ENCODE measurements at regions of chr3 and their contacts with region 1.

Region 1: GRCh38 chr3:156151824-156152428 is 31.5 kb downstream of the KCNAB1 start:
- DNase-seq: peak; percentile 11
- H3K4me3 Mint-ChIP-seq: no peak overlapping the region
- H3K27ac Mint-ChIP-seq: no peak overlapping the region
- H3K4me1 Mint-ChIP-seq: peaks cover 7% of the 10 kb centered on the region
- H3K27me3 Mint-ChIP-seq: peaks cover 7% of the 10 kb centered on the region

Region 2: GRCh38 chr3:156382458-156383346 is 230.8 kb after region 1 on chr3:
- intact Hi-C with region 1: loop called (anchors 2 kb)
- DNase-seq: no peak
- H3K4me3 Mint-ChIP-seq: no peak overlapping the region
- H3K27ac Mint-ChIP-seq: no peak overlapping the region
- H3K4me1 Mint-ChIP-seq: no peaks in the 10 kb centered on the region
- H3K27me3 Mint-ChIP-seq: peaks cover 19% of the 10 kb centered on the region

Region 3: DNA sequence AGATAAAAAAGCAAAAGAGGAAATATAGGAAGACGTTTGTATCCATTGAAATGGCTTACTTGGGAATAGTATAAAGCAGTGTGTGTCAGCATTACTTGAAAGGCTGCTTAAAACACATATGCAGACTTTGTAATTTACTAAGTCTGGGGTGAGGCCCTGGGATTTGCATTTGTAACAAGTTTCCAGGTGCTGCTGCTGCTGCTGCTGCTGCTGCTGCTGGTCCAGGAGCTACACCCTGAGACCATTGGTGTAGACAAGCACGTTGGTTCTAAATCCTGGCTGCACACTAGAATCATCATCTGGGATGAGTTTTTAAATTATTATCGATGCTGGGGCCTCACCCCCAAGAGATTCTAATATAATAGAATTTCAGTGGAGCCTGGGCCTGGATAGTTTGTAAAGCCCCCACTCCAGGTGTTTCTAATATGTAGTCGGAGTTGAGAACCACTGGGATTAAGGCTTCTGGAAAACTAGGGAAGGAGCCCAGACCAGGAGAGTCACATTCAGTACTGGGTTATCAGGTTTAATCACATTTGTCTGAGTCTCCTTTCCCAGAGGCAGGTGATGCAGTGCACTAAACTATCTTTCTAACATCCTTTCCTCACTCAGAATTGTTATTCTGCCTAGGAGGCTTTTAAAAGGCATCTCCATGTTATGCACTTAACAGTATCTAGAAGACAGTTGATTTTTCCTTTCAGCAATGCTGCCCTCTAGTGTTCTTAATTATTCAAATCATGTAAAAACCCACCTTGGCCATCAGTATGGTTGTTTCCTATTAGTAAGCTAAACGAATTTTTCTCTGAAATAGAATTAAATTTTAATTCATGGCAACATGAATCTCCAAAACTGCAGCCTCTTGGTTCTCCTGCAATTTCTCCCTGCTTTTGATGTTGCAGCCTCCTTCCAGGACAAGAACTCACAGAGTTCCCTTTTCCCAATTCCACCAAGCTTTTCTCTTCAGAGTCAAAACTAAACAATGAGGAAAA is 357.6 kb after region 1 on chr3:
- intact Hi-C with region 1: loop called (anchors 1 kb)
- DNase-seq: no peak
- H3K4me3 Mint-ChIP-seq: no peak overlapping the region
- H3K27ac Mint-ChIP-seq: no peak overlapping the region
- H3K4me1 Mint-ChIP-seq: peaks cover 14% of the 10 kb centered on the region
- H3K27me3 Mint-ChIP-seq: peaks cover 20% of the 10 kb centered on the region

Region 4: GRCh38 chr3:156816800-156817645 is 665.1 kb after region 1 on chr3:
- intact Hi-C with region 1: loop called (anchors 10 kb)
- DNase-seq: peak; percentile 90
- H3K4me3 Mint-ChIP-seq: peak overlapping the region; percentile 92
- H3K27ac Mint-ChIP-seq: peak overlapping the region; percentile 98
- H3K4me1 Mint-ChIP-seq: peaks cover 75% of the 10 kb centered on the region
- H3K27me3 Mint-ChIP-seq: no peaks in the 10 kb centered on the region

Region 5: DNA sequence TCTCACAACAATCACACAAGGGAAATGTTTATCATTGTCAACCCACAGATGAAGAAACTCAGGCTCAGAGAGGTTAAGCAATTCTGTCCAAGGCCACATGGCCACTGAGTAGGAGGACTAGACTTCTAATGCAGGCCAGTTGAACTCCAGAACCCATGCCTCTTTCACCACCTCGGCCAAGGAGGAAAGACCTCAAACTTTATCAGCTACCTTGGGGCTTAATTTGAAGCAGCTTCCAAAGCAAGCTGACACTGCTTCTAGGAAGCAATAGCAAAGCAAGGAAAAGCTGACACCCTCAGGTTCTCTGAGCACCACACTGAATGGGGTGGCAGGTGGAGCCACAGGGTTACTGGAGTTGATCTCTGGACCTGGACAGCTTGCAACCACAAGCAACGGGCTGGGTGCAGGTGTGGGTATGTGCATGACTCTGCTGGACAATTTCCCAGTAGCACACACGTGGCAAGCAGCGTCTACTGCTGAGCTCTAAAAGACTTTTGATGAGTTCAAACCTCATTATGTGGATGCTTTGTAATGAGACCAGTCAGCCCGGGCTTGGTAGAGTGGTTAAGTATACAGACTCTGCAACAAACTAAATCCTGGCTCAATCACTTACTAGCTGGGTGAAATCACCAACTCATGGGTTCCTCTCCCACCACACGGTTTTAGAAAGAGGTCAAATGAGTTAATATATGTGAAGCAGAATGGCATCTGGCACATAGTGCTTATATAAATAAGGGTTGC is 984.9 kb after region 1 on chr3:
- intact Hi-C with region 1: loop called (anchors 1 kb)
- DNase-seq: no peak
- H3K4me3 Mint-ChIP-seq: no peak overlapping the region
- H3K27ac Mint-ChIP-seq: peak overlapping the region; percentile 35
- H3K4me1 Mint-ChIP-seq: peaks cover 57% of the 10 kb centered on the region
- H3K27me3 Mint-ChIP-seq: no peaks in the 10 kb centered on the region